PC-3 (cell line): ENCODE measurements at regions of chr2 and their contacts with region 1.

Region 1: DNA sequence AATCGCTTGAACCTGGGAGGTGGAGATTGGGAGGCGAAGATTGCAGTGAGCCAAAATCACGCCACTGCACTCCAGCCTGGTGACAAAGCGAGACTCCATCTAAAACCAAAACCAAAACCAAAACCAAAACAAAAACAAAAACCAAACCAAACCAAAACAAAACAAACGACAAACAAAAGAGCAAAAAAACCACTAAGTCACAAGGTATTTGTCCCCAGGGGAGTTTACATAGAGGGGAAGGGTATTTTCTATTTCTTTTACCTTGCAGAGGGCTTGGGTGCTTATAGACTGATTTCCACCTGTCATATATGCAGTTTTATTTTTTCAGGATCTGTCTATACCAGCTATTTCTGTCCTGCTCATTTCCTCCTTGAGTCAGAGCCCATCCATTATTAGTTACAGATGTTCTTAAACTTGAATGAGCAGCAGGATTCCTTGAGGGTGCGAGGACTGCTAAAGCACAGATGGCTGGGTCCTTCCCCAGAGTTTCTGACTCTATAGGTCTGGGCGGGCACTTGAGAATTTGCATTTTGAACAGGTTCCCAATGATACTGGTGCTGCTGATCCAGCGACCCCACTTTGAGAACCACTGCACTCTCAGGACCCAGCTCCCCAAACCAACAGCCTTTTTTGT is 102.2 kb upstream of the UXS1 start:
- DNase-seq: no peak
- ATAC-seq: no peak
- H3K4me3 ChIP-seq: no peak overlapping the region
- H3K27ac ChIP-seq: no peak overlapping the region
- H3K4me1 ChIP-seq: no peaks in the 10 kb centered on the region
- H3K27me3 ChIP-seq: peaks cover 57% of the 10 kb centered on the region
- CTCF ChIP-seq: no peak

Region 2: DNA sequence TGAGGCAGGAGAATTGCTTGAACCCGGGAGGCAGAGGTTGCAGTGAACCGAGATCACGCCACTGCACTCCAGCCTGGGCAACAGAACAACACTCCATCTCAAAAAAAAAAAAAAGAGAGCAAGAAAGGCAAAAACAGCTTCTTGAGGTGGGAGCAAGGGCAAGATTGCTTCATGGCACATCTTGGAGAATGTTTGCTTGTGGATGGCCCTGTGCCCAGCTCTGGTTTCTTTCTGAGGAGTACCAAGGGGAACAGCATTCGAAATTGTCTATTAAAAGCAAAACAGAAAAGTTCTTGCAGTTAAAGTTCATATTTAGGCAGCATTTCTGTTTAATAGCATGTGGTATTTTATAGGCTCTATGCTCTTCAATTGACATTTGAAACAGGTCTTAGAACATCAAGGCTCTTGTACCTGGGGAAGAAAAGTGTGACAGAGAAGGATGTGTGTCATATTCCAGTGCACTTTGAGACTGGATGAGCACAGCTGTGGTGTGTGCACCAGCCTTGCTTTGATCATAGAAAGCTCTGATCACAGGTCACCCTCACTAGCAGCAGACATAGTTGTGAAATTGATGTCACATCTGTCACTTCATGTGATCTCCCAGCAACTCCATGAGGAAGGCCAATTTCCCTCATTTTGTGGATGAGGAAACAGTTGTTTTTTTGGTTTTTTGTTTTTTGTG is 256.5 kb before region 1 on chr2:
- CTCF ChIA-PET with region 1: no interaction called
- POLR2A ChIA-PET with region 1: no interaction called
- intact Hi-C with region 1: no loop called
- DNase-seq: no peak
- ATAC-seq: no peak
- H3K4me3 ChIP-seq: no peak overlapping the region
- H3K27ac ChIP-seq: no peak overlapping the region
- H3K4me1 ChIP-seq: peaks cover 2% of the 10 kb centered on the region
- H3K27me3 ChIP-seq: no peaks in the 10 kb centered on the region
- CTCF ChIP-seq: no peak

Region 3: GRCh38 chr2:106257830-106258229 is 38.5 kb before region 1 on chr2:
- CTCF ChIA-PET with region 1: interaction called, 13 read pairs
- POLR2A ChIA-PET with region 1: no interaction called
- intact Hi-C with region 1: no loop called
- DNase-seq: no peak
- ATAC-seq: no peak
- H3K4me3 ChIP-seq: no peak overlapping the region
- H3K27ac ChIP-seq: no peak overlapping the region
- H3K4me1 ChIP-seq: no peaks in the 10 kb centered on the region
- H3K27me3 ChIP-seq: no peaks in the 10 kb centered on the region
- CTCF ChIP-seq: no peak

Region 4: DNA sequence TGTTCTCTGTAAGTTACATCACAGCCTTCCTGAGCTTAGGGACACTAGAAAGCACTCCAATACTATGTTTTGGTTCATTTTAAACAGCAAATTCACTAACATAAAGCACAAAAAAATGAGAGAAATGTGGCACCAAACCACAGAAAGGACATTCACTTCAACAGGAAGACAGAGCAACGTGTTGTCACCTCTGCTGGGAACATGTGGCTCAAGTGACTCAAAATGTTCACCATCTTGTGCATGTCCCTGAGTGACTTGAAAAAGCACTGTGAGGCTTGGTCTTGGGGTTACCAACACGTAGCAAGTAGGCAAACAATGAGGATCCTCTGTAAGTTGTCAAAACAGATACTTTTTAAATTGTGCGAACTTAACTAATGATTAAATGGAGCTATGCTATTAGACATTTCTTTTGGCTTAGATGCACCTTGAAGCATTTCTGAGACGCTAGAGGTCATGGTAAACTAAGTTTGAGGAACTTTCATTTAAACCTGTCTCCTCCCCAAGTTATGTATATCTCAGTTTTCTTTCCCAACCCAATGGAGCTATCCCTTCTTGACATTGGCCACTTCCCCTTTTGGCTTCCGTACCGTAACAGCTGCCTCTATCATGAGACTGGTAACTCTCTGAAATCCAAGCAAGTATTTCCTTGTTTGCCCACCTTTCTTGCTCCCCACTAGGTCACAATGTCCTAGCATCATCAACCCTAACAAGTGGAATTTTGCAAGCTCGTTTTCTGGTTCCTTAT is 603.7 kb after region 1 on chr2:
- CTCF ChIA-PET with region 1: no interaction called
- POLR2A ChIA-PET with region 1: no interaction called
- intact Hi-C with region 1: no loop called
- DNase-seq: no peak
- ATAC-seq: no peak
- H3K4me3 ChIP-seq: no peak overlapping the region
- H3K27ac ChIP-seq: no peak overlapping the region
- H3K4me1 ChIP-seq: no peaks in the 10 kb centered on the region
- H3K27me3 ChIP-seq: no peaks in the 10 kb centered on the region
- CTCF ChIP-seq: no peak